ENCODE measurements at regions of chr1 and their contacts with region 1.

Region 1: DNA sequence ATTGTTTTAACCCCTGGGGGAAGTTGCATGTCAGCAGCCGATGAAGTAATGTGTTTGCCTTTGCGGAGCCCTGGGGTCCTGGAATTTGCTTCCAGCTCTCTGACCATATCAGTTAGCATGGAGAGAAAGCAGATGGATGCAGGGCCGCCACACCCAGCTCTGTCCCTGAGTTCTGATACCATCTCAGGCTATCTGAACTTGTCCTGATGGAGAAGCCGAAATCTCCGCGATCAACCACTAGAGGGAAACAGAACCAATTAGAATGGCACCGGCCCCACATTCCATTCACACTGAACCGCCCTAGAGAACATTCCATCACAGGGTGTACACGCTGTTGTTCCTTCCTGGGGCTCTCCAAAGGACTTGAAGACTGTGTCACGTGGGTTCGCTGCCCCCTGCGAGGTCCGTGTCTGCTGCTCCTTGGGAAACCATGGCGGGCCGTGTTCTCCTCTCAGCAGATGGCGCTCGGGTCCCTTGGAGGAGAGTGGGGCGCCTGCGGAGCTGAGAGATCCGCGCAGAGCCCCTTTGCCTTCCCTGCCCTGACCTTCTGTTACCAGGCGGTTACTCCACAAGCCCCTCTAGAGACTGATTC is 75.4 kb downstream of the ABCA4 start:
- DNase-seq: peak; percentile 90
- H3K4me3 Mint-ChIP-seq: no peak overlapping the region
- H3K27ac Mint-ChIP-seq: peak overlapping the region; percentile 51
- H3K4me1 Mint-ChIP-seq: peaks cover 18% of the 10 kb centered on the region
- H3K27me3 Mint-ChIP-seq: no peaks in the 10 kb centered on the region
- CTCF ChIP-seq: peak; percentile 45

Region 2: DNA sequence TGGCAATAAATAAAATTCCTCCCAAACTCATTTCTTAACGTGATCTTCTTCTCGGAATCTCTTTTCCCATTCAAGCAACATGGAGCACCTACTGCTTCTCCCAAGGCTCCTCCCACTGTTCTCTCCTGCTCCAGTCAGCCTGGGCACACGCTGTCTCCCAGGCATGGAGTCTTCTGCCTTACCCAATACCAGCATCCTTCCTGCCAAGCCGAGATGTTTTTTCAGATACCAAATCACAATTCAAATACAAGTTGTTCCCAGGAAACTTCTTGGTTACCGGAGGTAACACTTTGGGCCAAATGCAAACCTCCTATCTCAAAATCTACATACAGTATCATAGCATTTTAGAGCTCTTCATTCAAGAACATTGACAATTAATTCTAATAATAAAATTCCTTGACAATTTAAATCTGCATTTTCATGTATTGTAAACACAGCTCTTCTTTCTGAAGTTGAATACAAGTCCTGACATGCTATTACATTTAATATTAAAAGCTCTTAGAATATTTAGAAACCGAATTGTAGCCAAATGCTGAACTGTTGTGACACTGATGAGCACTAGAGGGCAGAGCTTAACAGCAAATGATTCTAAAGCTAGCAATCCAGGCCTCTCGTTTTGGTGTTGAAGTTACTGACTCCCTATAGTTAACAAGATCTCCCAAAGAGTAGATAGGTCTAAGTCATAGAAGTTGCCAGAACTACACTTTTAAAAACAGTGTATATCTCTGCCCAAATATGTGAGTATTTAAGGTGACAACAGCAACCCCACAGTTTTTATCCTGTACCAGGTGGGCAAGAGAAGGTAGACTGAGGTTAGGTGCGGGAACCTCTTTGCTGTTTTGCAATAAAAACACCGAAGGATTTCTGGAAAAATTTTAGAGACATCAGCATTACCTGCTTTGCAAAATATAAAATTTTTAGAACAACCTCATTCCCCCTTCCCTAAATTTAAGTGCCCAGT is 416.2 kb before region 1 on chr1:
- CTCF ChIA-PET with region 1: no interaction called
- POLR2A ChIA-PET with region 1: no interaction called
- intact Hi-C with region 1: no loop called
- DNase-seq: peak; percentile 76
- H3K4me3 Mint-ChIP-seq: peak overlapping the region; percentile 52
- H3K27ac Mint-ChIP-seq: peak overlapping the region; percentile 95
- H3K4me1 Mint-ChIP-seq: peaks cover 46% of the 10 kb centered on the region
- H3K27me3 Mint-ChIP-seq: no peaks in the 10 kb centered on the region
- CTCF ChIP-seq: peak; percentile 63

Region 3: DNA sequence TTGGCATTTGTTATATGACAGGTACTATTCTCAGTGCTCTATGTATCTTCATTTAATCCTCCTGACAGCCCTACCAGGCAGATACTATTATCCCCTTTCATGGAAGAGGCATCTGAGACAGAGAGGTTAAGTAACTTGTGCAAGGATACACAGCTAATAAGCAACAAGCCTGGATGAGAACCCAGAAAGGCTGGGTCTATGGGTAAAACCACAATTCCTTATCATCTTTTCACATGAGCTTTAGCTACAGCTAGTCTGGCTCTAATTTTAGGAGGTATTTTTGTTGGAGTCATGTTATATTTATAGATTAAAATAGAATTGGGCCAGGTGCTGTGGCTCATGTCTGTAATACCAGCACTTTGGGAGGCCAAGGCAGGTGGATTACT is 194.2 kb before region 1 on chr1:
- CTCF ChIA-PET with region 1: no interaction called
- POLR2A ChIA-PET with region 1: no interaction called
- intact Hi-C with region 1: no loop called
- DNase-seq: no peak
- H3K4me3 Mint-ChIP-seq: no peak overlapping the region
- H3K27ac Mint-ChIP-seq: no peak overlapping the region
- H3K4me1 Mint-ChIP-seq: no peaks in the 10 kb centered on the region
- H3K27me3 Mint-ChIP-seq: no peaks in the 10 kb centered on the region
- CTCF ChIP-seq: no peak

Region 4: GRCh38 chr1:93899543-93900207 is 145.9 kb before region 1 on chr1:
- CTCF ChIA-PET with region 1: no interaction called
- POLR2A ChIA-PET with region 1: no interaction called
- intact Hi-C with region 1: no loop called
- DNase-seq: no peak
- H3K4me3 Mint-ChIP-seq: no peak overlapping the region
- H3K27ac Mint-ChIP-seq: no peak overlapping the region
- H3K4me1 Mint-ChIP-seq: no peaks in the 10 kb centered on the region
- H3K27me3 Mint-ChIP-seq: no peaks in the 10 kb centered on the region
- CTCF ChIP-seq: no peak

Region 5: DNA sequence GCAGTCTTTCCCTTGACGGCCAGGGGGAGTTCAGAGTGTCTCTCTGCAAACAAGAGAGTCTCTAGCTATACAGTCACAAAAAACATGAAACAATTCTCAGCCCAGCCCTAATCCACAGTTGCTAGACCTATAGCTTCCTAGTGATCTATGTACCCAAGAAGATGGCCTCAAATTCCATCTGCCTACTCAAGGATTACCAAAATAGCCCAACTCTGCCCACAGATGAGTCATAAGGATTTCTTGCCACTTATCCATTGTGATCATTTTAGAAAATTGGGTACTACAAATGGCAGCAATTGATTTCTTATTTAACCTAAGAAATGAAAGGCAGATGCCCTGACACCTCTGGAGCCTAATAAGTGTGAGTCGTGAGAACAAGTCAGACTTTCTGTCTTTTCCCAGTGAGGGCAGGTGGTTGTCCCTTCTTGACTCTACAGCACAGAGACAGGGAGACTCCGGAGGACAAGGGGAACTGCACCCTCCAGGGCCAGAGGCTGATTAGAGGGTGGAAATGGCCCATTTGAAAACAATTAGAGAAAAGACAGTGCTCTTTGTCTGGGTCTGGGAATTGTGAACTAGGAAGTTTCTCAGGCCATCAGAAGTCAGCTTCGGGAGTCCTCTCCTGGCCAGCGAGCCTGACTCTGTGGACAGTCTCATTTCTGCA is 10.0 kb after region 1 on chr1:
- CTCF ChIA-PET with region 1: interaction called, 99 read pairs
- POLR2A ChIA-PET with region 1: interaction called, 3 read pairs
- intact Hi-C with region 1: no loop called
- DNase-seq: peak; percentile 37
- H3K4me3 Mint-ChIP-seq: no peak overlapping the region
- H3K27ac Mint-ChIP-seq: no peak overlapping the region
- H3K4me1 Mint-ChIP-seq: peaks cover 8% of the 10 kb centered on the region
- H3K27me3 Mint-ChIP-seq: no peaks in the 10 kb centered on the region
- CTCF ChIP-seq: no peak

Measured in MCF 10A (cell line).